ENCODE measurements at regions of chr21 and their contacts with region 1.

Region 1: GRCh38 chr21:39349211-39350093 is 564 bp upstream of the HMGN1 start:
- DNase-seq: peak; percentile 97
- H3K4me3 ChIP-seq: peak overlapping the region; percentile 63 to 75 (median 64)
- H3K27ac ChIP-seq: peak overlapping the region; percentile 63
- H3K4me1 ChIP-seq: peaks cover 19% of the 10 kb centered on the region
- H3K27me3 ChIP-seq: no peaks in the 10 kb centered on the region
- CTCF ChIP-seq: no peak

Region 2: DNA sequence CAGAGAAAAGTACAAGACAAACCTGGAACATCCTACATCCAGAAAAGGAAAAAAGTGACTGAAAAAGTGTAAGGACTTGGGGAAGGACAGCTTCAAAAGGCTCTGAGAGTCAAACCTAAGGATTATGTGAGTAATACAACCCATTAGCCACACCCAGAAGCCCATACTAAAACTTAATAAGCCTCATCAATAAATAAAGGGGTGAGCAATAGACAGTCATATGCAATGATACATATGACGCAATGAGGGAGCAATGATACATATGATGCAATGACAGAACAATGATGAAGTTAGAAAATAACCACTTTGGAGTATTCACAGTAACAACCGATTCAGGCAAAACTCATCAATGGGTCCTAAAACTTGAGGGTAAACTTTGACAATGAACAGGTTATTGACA is 86.1 kb before region 1 on chr21:
- CTCF ChIA-PET with region 1: no interaction called
- dilution Hi-C with region 1: no loop called
- in situ Hi-C with region 1: no loop called
- intact Hi-C with region 1: loop called (anchors 5 kb)
- DNase-seq: peak; percentile 24
- H3K4me3 ChIP-seq: no peak overlapping the region
- H3K27ac ChIP-seq: no peak overlapping the region
- H3K4me1 ChIP-seq: peaks cover 6% of the 10 kb centered on the region
- H3K27me3 ChIP-seq: no peaks in the 10 kb centered on the region
- CTCF ChIP-seq: no peak

Region 3: DNA sequence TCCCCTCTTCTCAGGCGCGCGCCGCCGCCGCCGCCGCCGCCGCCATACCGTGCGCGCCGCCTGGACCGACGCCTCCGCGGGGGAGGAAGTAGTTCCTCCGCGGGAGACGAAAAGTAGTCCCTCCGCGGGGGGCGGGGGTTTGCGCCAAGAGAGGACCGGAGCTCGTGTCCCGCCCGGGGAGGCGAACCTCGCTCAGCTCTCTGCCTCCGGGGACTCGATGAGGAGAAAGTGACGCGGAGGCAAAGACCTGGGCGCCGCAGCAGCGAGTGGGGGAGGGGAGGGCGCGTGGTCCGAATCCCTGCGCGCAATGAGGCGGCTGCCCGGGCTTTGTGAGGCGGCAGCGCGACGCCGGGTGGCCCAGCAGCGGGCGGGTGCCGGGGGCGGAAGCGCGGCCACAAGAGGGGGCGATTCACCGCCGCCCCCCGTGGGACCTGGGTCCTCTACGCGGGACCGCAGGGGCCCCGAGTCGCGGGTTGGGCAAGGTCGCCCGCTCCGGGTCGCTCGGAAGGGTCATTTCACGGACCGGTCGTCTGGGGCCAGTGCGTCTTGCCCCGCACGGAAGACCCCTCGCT is 35.8 kb before region 1 on chr21 and contains the start of gene BRWD1:
- CTCF ChIA-PET with region 1: no interaction called
- dilution Hi-C with region 1: loop called (anchors 5 kb)
- in situ Hi-C with region 1: no loop called
- intact Hi-C with region 1: loop called (anchors 1 kb)
- DNase-seq: peak; percentile 82
- H3K4me3 ChIP-seq: peak within 1 kb of the TSS; percentile 63 to 86 (median 65)
- H3K27ac ChIP-seq: peak within 1 kb of the TSS; percentile 86
- H3K4me1 ChIP-seq: peaks cover 32% of the 10 kb centered on the region
- H3K27me3 ChIP-seq: no peaks in the 10 kb centered on the region
- CTCF ChIP-seq: no peak
- total RNA-seq, gene BRWD1: 29.2 to 60.0 TPM

Region 4: DNA sequence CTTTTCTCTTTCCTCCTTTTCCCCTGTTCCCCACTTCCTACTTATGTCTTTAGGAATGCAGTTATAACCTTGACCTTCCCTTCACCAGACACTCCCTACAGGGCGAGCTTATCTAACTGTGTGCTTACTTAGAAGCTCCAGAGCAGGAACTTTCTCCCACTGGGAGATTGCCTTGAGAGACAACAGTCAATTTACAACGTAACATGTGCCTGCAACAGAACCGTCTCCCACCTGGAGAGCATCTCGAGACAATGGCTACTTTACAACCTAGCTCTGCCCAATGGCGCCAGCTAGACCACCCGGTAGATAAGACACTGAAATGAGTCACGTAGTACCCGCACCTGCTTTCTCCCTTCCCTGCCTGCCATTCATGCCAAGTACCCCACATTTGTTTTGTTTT is 17.3 kb before region 1 on chr21:
- CTCF ChIA-PET with region 1: no interaction called
- dilution Hi-C with region 1: no loop called
- in situ Hi-C with region 1: no loop called
- intact Hi-C with region 1: no loop called
- DNase-seq: no peak
- H3K4me3 ChIP-seq: no peak overlapping the region
- H3K27ac ChIP-seq: no peak overlapping the region
- H3K4me1 ChIP-seq: no peaks in the 10 kb centered on the region
- H3K27me3 ChIP-seq: no peaks in the 10 kb centered on the region
- CTCF ChIP-seq: no peak

Measured in mammary epithelial cell (primary cell).